Stomach (tissue), 19 donors: ENCODE measurements at regions of chr3 and their contacts with region 1.

Region 1: DNA sequence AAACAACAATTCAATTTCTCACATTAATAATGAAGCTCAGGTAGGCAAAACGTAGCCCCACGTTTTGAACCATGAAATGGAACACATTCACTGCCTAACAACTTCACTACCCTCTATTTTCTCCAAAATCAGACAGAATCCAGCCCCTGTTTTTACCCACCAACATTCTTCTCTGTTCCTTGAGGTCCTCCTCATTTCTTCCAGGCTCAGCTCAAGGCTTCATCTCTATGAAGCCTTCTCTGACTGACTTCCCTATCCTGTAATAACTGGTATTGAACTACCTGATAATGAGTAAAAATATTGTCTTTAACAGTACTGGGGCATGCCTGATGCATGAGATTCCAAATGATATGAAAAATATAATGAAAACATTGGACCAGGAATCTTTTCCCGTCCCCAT is 2.2 kb downstream of the TFRC start:
- DNase-seq: no peak
- H3K4me3 ChIP-seq: peak overlapping the region in 2 of 4 donors; percentile 85 to 90
- H3K27ac ChIP-seq: peak overlapping the region in 1 of 5 donors; percentile 97
- H3K4me1 ChIP-seq: peaks cover 16 to 42% (median 35%) of the 10 kb centered on the region in 4 donors
- H3K27me3 ChIP-seq: no peaks in the 10 kb centered on the region
- CTCF ChIP-seq: no peak
- EP300 ChIP-seq: no peak
- POLR2A ChIP-seq: no peak

Region 2: GRCh38 chr3:196198771-196199753 is 119.4 kb after region 1 on chr3:
- intact Hi-C with region 1: loop called (anchors 5 kb)
- DNase-seq: no peak
- H3K4me3 ChIP-seq: no peak overlapping the region
- H3K27ac ChIP-seq: no peak overlapping the region
- H3K4me1 ChIP-seq: peaks cover 6 to 45% (median 9%) of the 10 kb centered on the region in 4 donors
- H3K27me3 ChIP-seq: peaks cover 0 to 14% (median 0%) of the 10 kb centered on the region in 3 donors
- CTCF ChIP-seq: no peak
- EP300 ChIP-seq: no peak
- POLR2A ChIP-seq: no peak